ENCODE measurements at regions of chr19 and their contacts with region 1.

Region 1: GRCh38 chr19:17511724-17512573 is 500 bp downstream of the PGLS start:
- DNase-seq: peak; percentile 95
- H3K4me3 ChIP-seq: peak overlapping the region; percentile 91 to 100 (median 95)
- H3K27ac ChIP-seq: peak overlapping the region; percentile 99 to 100 (median 100)
- H3K4me1 ChIP-seq: peaks cover 0 to 37% (median 30%) of the 10 kb centered on the region in 4 donors
- H3K27me3 ChIP-seq: no peaks in the 10 kb centered on the region
- CTCF ChIP-seq: no peak
- EP300 ChIP-seq: peak in 2 of 4 donors; percentile 15 to 64
- POLR2A ChIP-seq: peak; percentile 15 to 26

Region 2: DNA sequence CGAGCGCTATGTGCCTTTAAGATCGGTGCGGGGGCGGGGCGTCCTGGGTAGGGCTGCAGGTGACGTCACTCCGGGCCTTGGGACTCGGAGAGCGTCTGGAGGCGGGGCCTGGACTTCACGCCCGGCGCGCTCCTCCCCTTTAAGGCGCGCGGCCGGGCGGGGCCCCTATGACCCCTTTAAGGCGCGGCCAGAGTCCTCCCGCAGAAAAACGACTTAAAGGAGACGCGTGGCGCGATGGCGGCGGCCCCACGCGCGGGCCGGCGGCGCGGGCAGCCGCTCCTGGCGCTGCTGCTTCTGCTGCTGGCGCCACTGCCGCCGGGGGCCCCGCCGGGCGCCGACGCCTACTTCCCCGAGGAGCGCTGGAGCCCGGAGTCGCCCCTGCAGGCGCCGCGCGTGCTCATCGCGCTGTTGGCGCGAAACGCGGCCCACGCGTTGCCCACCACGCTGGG is 43.6 kb after region 1 on chr19 and contains the start of gene COLGALT1:
- intact Hi-C with region 1: loop called (anchors 2 kb)
- DNase-seq: peak; percentile 99
- H3K4me3 ChIP-seq: peak within 1 kb of the TSS; percentile 76 to 91 (median 86)
- H3K27ac ChIP-seq: peak within 1 kb of the TSS; percentile 80 to 87 (median 82)
- H3K4me1 ChIP-seq: peaks cover 0 to 24% (median 16%) of the 10 kb centered on the region in 4 donors
- H3K27me3 ChIP-seq: no peaks in the 10 kb centered on the region
- CTCF ChIP-seq: no peak
- EP300 ChIP-seq: no peak
- POLR2A ChIP-seq: no peak
- total RNA-seq, gene COLGALT1: 49.6 to 62.3 (median 53.5) TPM

Measured in sigmoid colon (tissue), 7 donors.